Naive thymus-derived CD8-positive, alpha-beta T cell (primary cell): ENCODE measurements at regions of chr16 and their contacts with region 1.

Region 1: DNA sequence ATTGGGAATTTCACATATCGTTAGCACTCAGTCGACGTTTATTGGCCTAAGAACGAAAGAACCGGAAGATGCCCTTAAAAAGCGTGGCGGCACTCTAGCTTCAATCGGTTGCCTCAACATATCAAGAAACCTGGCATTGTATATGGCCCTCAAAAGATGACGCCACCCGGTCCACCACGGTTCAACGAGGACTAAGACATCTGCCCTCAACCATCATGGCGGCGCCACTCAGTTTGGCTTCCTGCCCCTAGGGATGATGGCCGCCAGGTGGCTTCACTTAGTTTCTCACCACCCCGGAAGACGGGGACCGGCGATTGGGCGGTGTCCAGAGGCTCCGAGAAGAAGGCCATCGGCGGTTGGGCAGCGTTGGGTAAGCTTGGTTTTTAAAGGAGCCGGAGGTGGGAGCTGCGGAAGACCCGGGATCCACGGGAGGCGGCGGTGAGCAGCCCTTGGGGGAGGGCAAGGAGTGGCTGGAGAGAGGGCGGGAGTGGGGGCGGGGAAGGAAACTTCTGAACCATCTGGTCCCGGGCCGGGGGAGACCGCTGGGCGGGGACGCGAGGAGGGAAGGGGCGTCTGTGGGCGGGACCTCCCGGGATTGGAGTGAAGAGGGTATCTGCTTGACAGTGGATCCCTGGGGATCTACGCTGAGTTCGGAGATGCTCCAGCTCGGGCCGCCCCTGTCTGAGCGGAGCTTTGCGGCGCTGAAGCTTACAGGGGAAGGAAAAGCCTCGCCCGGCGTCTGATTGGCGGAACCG is at the start of gene PRR14:
- DNase-seq: peak; percentile 87 to 99 (median 96)
- ATAC-seq: peak; percentile 87 to 90
- H3K4me3 Mint-ChIP-seq: peak within 1 kb of the TSS; percentile 97 to 100 (median 99)
- H3K27ac Mint-ChIP-seq: peak within 1 kb of the TSS; percentile 95 to 100 (median 98)
- H3K4me1 Mint-ChIP-seq: peaks cover 17 to 35% (median 29%) of the 10 kb centered on the region in 4 donors
- H3K27me3 Mint-ChIP-seq: no peaks in the 10 kb centered on the region
- polyA plus RNA-seq, gene PRR14: 13.3 to 22.3 (median 15.3) TPM

Region 2: DNA sequence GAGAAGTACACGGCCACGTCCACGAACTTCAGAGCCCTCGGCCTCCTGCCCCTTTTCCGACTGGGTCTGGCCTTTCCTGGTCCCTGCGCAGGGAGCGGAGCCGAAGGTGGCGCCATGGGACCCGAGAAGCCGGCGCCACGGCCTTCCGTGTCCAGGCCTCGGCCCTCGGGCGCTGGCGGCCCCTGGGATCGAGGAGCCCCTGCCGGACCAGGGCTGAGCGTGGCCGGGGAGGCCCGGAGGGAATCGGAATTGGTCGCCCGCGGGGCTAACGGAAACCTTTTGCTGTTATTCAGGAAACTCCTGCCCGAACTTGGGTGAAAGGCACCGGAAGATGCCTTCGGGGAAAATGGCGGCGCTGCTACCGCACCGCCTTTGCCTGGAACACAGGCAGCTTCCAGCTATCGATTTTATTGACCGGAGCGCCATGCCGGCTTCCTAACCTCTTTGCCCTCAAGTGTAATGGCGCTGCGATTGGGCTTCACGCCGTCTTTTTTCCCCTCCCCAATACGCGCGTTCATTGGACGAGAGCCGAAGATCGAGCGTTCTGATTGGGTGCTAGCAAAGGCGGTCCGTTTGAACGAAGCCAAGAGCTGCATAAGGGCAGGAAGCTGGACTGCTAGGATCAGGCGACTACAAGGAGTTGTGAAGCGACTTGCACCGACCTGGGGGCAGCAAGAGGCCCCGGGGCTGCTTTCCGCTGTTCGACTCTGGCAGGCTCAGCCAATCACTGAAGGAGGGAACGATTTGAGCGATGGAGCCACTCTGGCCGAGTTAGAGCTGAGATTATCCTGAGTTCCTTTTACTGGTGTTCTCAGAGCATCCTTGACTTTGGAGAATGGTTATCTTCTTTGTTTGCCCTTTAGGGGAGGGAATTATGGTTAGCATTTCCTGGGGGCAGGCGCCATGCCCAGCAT is 40.4 kb before region 1 on chr16 and contains the start of gene ZNF689:
- POLR2A ChIA-PET with region 1: interaction called, 14 read pairs
- DNase-seq: peak; percentile 77 to 99 (median 94)
- ATAC-seq: peak; percentile 92 to 93
- H3K4me3 Mint-ChIP-seq: peak within 1 kb of the TSS; percentile 87 to 97 (median 94)
- H3K27ac Mint-ChIP-seq: peak within 1 kb of the TSS; percentile 94 to 99 (median 97)
- H3K4me1 Mint-ChIP-seq: peaks cover 5 to 30% (median 27%) of the 10 kb centered on the region in 4 donors
- H3K27me3 Mint-ChIP-seq: peaks cover 0 to 1% (median 0%) of the 10 kb centered on the region in 5 donors
- polyA plus RNA-seq, gene ZNF689: 7.7 to 12.5 (median 11.0) TPM

Region 3: GRCh38 chr16:30633526-30633917 is 17.0 kb before region 1 on chr16:
- POLR2A ChIA-PET with region 1: interaction called, 17 read pairs
- DNase-seq: no peak
- ATAC-seq: no peak
- H3K4me3 Mint-ChIP-seq: peak overlapping the region; percentile 85 to 99 (median 94)
- H3K27ac Mint-ChIP-seq: peak overlapping the region; percentile 93 to 99 (median 98)
- H3K4me1 Mint-ChIP-seq: peaks cover 14 to 25% (median 22%) of the 10 kb centered on the region in 4 donors
- H3K27me3 Mint-ChIP-seq: no peaks in the 10 kb centered on the region

Region 4: GRCh38 chr16:30698139-30698815 is 47.7 kb after region 1 on chr16:
- POLR2A ChIA-PET with region 1: interaction called, 62 read pairs
- DNase-seq: peak; percentile 98 to 100 (median 100)
- ATAC-seq: peak; percentile 75 to 77
- H3K4me3 Mint-ChIP-seq: peak overlapping the region; percentile 93 to 98 (median 96)
- H3K27ac Mint-ChIP-seq: peak overlapping the region; percentile 99 to 100 (median 100)
- H3K4me1 Mint-ChIP-seq: peaks cover 14 to 43% (median 40%) of the 10 kb centered on the region in 4 donors
- H3K27me3 Mint-ChIP-seq: no peaks in the 10 kb centered on the region